ENCODE measurements at regions of chr2 and their contacts with region 1.

Region 1: GRCh38 chr2:8303322-8303832 is 378.5 kb upstream of the ID2 start:
- DNase-seq: peak; percentile 77
- H3K4me3 Mint-ChIP-seq: peak overlapping the region; percentile 65
- H3K27ac Mint-ChIP-seq: peak overlapping the region; percentile 85
- H3K4me1 Mint-ChIP-seq: peaks cover 91% of the 10 kb centered on the region
- H3K27me3 Mint-ChIP-seq: peaks cover 7% of the 10 kb centered on the region

Region 2: GRCh38 chr2:7450188-7450832 is 853.1 kb before region 1 on chr2:
- intact Hi-C with region 1: loop called (anchors 5 kb)
- DNase-seq: peak; percentile 65
- H3K4me3 Mint-ChIP-seq: peak overlapping the region; percentile 9
- H3K27ac Mint-ChIP-seq: peak overlapping the region; percentile 98
- H3K4me1 Mint-ChIP-seq: peaks cover 90% of the 10 kb centered on the region
- H3K27me3 Mint-ChIP-seq: no peaks in the 10 kb centered on the region

Region 3: DNA sequence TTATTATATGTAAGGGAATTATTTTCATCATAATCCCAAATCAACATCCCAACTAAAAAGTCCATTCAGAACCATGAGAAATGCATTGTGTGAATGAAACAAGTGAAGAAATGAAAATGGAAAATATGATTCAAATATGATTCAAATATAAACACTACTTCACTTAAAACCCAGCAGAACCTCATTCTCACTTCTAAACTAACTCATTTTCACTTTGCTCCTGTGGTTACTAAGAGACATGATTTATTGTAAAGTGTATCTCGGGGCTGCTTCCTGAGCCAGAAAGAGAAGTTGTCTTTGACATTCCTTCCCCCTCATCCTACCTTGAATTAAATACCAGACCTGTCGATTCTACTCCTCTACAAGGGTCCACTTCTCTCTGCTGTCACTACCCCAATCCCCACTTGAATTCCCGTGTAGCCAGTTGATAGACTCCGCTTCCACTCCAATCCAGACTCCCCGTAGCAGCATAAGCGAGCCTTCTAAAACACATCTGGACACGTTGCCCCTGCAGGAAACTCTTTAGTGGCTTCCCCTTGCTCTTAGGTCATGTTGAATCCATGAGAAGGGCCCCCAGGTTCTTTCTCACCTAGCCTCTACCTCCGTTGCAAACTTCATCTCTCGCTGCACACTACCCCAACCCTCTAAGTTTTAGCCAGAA is 318.6 kb before region 1 on chr2:
- intact Hi-C with region 1: loop called (anchors 1 kb)
- DNase-seq: no peak
- H3K4me3 Mint-ChIP-seq: peak overlapping the region; percentile 12
- H3K27ac Mint-ChIP-seq: peak overlapping the region; percentile 82
- H3K4me1 Mint-ChIP-seq: peaks cover 28% of the 10 kb centered on the region
- H3K27me3 Mint-ChIP-seq: no peaks in the 10 kb centered on the region

Region 4: GRCh38 chr2:8334866-8335325 is 31.5 kb after region 1 on chr2:
- intact Hi-C with region 1: loop called (anchors 1 kb)
- DNase-seq: no peak
- H3K4me3 Mint-ChIP-seq: no peak overlapping the region
- H3K27ac Mint-ChIP-seq: no peak overlapping the region
- H3K4me1 Mint-ChIP-seq: peaks cover 15% of the 10 kb centered on the region
- H3K27me3 Mint-ChIP-seq: peaks cover 6% of the 10 kb centered on the region

Region 5: DNA sequence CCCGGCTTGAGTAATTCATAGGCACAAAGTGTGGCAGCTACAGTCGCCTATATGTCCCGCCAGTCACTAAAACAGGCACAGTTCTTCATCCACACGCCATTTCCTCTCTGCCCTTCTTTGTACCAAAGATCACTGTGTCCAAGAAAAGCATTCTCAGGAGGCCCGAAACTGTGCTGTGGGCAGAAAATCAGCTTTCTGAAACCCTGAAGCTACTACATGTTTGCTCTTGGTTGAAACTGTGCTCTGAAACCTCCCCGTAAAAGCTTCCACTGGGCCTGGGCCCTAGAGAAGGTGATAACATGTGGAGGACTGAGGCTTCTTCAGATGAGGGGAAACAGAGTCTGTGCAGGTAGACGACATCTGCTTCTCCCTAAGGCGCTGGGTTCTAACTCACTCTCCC is 302.8 kb after region 1 on chr2:
- intact Hi-C with region 1: loop called (anchors 5 kb)
- DNase-seq: no peak
- H3K4me3 Mint-ChIP-seq: no peak overlapping the region
- H3K27ac Mint-ChIP-seq: no peak overlapping the region
- H3K4me1 Mint-ChIP-seq: peaks cover 44% of the 10 kb centered on the region
- H3K27me3 Mint-ChIP-seq: peaks cover 1% of the 10 kb centered on the region